ENCODE measurements at regions of chr1 and their contacts with region 1.

Region 1: GRCh38 chr1:183622884-183623785 is 12.4 kb downstream of the ARPC5 start:
- DNase-seq: peak; percentile 86
- H3K4me3 Mint-ChIP-seq: no peak overlapping the region
- H3K27ac Mint-ChIP-seq: peak overlapping the region; percentile 65
- H3K4me1 Mint-ChIP-seq: peaks cover 35% of the 10 kb centered on the region
- H3K27me3 Mint-ChIP-seq: no peaks in the 10 kb centered on the region
- CTCF ChIP-seq: peak; percentile 97

Region 2: GRCh38 chr1:183234660-183235476 is 388.3 kb before region 1 on chr1:
- CTCF ChIA-PET with region 1: no interaction called
- POLR2A ChIA-PET with region 1: no interaction called
- intact Hi-C with region 1: loop called (anchors 1 kb)
- DNase-seq: peak; percentile 100
- H3K4me3 Mint-ChIP-seq: peak overlapping the region; percentile 71
- H3K27ac Mint-ChIP-seq: peak overlapping the region; percentile 86
- H3K4me1 Mint-ChIP-seq: peaks cover 49% of the 10 kb centered on the region
- H3K27me3 Mint-ChIP-seq: no peaks in the 10 kb centered on the region
- CTCF ChIP-seq: peak; percentile 83

Region 3: DNA sequence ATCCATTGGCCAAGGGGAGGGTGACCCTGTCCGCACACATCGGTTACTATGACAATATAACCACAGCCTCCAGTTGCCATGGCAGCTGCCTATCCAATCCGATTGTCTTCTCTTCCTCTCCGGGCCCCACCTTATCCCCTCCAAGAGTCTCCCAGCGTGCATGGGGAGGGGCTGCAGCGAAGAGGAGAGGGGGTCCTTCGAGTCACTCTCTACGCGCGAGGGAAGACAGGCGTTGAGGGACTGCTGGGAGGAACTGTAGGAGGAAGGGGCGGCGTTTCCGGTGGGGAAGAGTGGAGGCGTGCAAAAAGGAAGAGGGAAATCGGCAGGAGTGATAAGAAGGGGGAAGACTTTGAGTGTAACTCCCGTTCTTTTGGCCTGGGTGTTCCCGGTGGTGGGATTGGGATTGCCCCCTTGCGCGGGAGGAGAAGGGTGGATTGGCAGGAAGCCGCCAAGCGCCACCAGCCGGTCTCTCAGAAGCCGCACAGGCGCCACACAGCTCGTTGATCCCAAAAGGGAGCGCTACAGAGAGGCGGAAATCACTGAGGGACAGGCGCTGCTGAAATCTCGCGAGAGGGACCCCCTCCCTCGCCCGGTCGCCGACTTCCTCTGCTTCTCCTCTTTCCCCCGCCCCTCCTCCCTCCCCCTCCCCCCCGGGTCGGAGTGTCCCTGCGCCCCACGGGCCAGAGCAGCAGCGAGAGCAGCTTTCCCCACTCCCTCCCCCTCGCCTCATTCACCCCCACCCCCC is 151.2 kb before region 1 on chr1:
- CTCF ChIA-PET with region 1: interaction called, 7 read pairs
- POLR2A ChIA-PET with region 1: interaction called, 64 read pairs
- intact Hi-C with region 1: loop called (anchors 1 kb)
- DNase-seq: peak; percentile 98
- H3K4me3 Mint-ChIP-seq: peak overlapping the region; percentile 86
- H3K27ac Mint-ChIP-seq: peak overlapping the region; percentile 98
- H3K4me1 Mint-ChIP-seq: peaks cover 21% of the 10 kb centered on the region
- H3K27me3 Mint-ChIP-seq: no peaks in the 10 kb centered on the region
- CTCF ChIP-seq: no peak

Region 4: GRCh38 chr1:183543619-183544204 is 79.4 kb before region 1 on chr1:
- CTCF ChIA-PET with region 1: interaction called, 4 read pairs
- POLR2A ChIA-PET with region 1: no interaction called
- intact Hi-C with region 1: loop called (anchors 2 kb)
- DNase-seq: peak; percentile 77
- H3K4me3 Mint-ChIP-seq: no peak overlapping the region
- H3K27ac Mint-ChIP-seq: no peak overlapping the region
- H3K4me1 Mint-ChIP-seq: peaks cover 7% of the 10 kb centered on the region
- H3K27me3 Mint-ChIP-seq: no peaks in the 10 kb centered on the region
- CTCF ChIP-seq: peak; percentile 77

Region 5: DNA sequence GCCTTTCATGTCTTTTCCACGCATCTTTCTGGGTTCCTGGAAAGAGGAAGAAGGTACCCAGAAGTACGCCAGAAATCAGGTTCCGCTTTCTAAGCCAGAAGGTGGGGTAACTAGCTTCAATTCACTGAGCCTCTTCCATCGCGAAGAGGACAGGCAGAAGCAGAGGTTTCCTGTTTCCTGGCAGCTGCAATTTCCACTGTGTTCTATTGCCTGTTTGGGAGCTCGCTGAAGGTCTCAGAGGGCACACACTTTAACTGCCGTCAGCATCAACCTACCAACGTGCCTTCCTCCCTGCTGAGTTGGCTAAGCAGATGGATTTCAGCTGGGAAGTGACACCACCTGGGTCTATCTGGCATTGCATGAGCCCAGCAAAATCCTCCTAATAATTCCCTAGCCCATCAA is 42.9 kb before region 1 on chr1:
- CTCF ChIA-PET with region 1: interaction called, 5 read pairs
- POLR2A ChIA-PET with region 1: interaction called, 4 read pairs
- intact Hi-C with region 1: loop called (anchors 1 kb)
- DNase-seq: peak; percentile 50
- H3K4me3 Mint-ChIP-seq: no peak overlapping the region
- H3K27ac Mint-ChIP-seq: no peak overlapping the region
- H3K4me1 Mint-ChIP-seq: peaks cover 9% of the 10 kb centered on the region
- H3K27me3 Mint-ChIP-seq: no peaks in the 10 kb centered on the region
- CTCF ChIP-seq: no peak

Region 6: GRCh38 chr1:183635606-183636333 is 12.6 kb after region 1 on chr1 and contains the start of gene ARPC5:
- CTCF ChIA-PET with region 1: interaction called, 12 read pairs
- POLR2A ChIA-PET with region 1: interaction called, 67 read pairs
- intact Hi-C with region 1: no loop called
- DNase-seq: peak; percentile 99
- H3K4me3 Mint-ChIP-seq: peak within 1 kb of the TSS; percentile 100
- H3K27ac Mint-ChIP-seq: peak within 1 kb of the TSS; percentile 97
- H3K4me1 Mint-ChIP-seq: peaks cover 15% of the 10 kb centered on the region
- H3K27me3 Mint-ChIP-seq: no peaks in the 10 kb centered on the region
- CTCF ChIP-seq: no peak
- total RNA-seq, gene ARPC5: 195 and 240 TPM in 2 replicates

Measured in MCF 10A (cell line).